Activated T-helper 1 cell treated with anti-CD3 and anti-CD28 coated beads, Interleukin-12 subunit alpha, Interleukin-12 subunit beta, Interleukin-2, Interleukin-4 antibody, amounts not matched to agents 30 ng/mL and 10 ng/mL and 1 ng/mL, durations not matched to agents 14 hours and 24 hours and 36 hours (primary cell): ENCODE measurements at regions of chr20 and their contacts with region 1.

Region 1: DNA sequence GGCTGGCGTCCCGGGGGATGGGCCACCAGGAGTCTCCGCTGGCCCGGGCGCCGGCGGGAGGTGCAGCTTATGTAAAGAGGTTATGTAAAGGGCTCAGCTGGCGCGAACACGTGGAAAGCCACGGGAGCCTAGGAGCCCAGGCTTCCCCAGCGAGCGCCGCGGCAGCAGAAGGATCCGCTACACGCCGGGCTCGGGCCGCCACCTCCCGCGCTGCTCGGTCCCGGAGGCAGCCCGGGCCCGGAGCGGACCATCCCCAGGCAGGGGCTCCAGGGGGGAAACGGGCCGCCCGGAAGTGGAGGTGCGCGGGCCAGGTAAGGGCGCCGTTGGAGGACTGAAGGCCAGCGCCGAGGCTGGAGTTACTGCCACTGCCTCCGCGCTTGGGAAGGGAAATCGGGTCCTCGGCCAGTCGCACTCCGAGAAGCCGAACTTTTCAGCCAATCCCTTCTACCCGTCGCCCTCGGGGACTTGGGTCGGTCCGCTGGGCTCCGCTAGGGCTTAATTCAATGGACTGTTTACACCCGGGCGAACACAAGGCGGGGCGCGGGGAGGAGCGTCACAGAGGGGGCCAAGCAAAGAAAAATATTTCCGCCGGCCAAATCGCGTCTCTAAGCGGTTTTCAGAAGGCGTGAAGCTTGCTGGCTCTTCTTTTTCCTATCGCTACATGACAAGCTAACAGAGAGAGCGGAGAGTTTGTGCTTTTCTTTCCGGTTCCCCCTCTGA is 398 bp downstream of the STK35 start:
- DNase-seq: peak; percentile 84
- H3K4me3 Mint-ChIP-seq: peak overlapping the region; percentile 92
- H3K27ac Mint-ChIP-seq: peak overlapping the region; percentile 100
- H3K4me1 Mint-ChIP-seq: peaks cover 40% of the 10 kb centered on the region
- H3K27me3 Mint-ChIP-seq: peaks cover 9% of the 10 kb centered on the region

Region 2: GRCh38 chr20:297098-297924 is 1804.7 kb before region 1 on chr20 and contains the start of gene ZCCHC3:
- intact Hi-C with region 1: loop called (anchors 5 kb)
- DNase-seq: peak; percentile 85
- H3K4me3 Mint-ChIP-seq: peak within 1 kb of the TSS; percentile 99
- H3K27ac Mint-ChIP-seq: peak within 1 kb of the TSS; percentile 100
- H3K4me1 Mint-ChIP-seq: peaks cover 52% of the 10 kb centered on the region
- H3K27me3 Mint-ChIP-seq: no peaks in the 10 kb centered on the region
- total RNA-seq, gene ZCCHC3: 25.9 TPM in 2 replicates

Region 3: DNA sequence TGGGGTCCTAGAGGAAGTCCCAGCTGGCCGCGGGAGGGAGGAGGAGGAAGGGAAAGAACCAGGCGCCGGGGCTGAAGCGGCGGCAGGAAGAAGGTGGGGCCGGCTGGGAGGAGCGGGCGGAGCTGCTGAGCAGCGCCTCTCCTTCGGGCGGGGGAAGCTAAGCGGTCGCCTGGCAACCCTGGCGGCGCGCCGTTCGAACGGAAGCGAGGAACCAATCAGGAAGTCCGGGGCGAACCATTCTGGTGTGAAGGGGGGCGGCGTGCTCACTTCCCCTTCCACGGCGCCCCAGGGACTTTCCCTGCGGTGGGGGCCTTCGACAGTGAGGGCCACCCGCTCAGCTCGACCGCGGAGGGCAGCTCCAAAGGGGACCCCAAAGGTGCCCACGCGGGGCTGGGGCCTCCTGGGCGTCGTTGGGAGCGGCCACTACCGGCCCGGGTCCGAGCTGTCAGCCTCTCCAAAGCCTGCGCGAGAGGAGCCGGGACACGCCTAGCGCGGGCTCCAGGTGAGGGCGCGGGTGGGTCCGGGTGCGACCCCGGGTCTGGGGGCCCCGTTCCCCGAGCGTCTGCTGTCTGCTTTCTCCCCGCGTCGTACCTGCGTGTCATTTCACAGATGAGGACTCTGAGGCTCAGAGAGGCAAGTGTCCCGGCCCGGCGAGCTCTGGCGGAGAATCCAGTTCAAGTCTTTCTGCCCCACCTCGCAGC is 1268.4 kb before region 1 on chr20 and contains the start of gene FAM110A:
- intact Hi-C with region 1: loop called (anchors 5 kb)
- DNase-seq: peak; percentile 95
- H3K4me3 Mint-ChIP-seq: peak within 1 kb of the TSS; percentile 81
- H3K27ac Mint-ChIP-seq: peak within 1 kb of the TSS; percentile 86
- H3K4me1 Mint-ChIP-seq: peaks cover 51% of the 10 kb centered on the region
- H3K27me3 Mint-ChIP-seq: peaks cover 2% of the 10 kb centered on the region
- total RNA-seq, gene FAM110A: 19.0 and 21.1 TPM in 2 replicates

Region 4: GRCh38 chr20:2118783-2119182 is 16.8 kb after region 1 on chr20:
- intact Hi-C with region 1: loop called (anchors 2 kb)
- DNase-seq: no peak
- H3K4me3 Mint-ChIP-seq: no peak overlapping the region
- H3K27ac Mint-ChIP-seq: peak overlapping the region; percentile 49
- H3K4me1 Mint-ChIP-seq: peaks cover 54% of the 10 kb centered on the region
- H3K27me3 Mint-ChIP-seq: no peaks in the 10 kb centered on the region

Region 5: DNA sequence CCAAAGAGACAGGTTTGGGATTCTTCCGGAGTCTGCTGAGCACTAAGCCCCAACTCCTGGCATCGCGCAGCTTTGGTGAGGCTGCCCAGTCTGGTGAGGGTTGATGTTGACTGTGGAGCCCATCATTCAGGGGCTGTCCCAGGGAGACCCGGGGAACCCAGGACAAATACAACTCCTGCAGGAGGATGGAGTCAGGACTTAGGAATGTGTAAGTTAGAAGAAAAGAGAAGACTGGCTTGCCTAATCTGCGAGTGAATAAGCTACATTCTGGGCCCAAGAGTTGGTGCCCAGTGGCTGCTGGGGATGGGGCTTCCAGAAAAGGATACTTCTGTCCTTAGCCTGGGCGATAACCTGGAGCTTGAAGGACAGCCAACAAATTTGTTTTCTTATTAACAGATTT is 47.5 kb after region 1 on chr20:
- intact Hi-C with region 1: no loop called
- DNase-seq: no peak
- H3K4me3 Mint-ChIP-seq: no peak overlapping the region
- H3K27ac Mint-ChIP-seq: no peak overlapping the region
- H3K4me1 Mint-ChIP-seq: no peaks in the 10 kb centered on the region
- H3K27me3 Mint-ChIP-seq: no peaks in the 10 kb centered on the region

Region 6: DNA sequence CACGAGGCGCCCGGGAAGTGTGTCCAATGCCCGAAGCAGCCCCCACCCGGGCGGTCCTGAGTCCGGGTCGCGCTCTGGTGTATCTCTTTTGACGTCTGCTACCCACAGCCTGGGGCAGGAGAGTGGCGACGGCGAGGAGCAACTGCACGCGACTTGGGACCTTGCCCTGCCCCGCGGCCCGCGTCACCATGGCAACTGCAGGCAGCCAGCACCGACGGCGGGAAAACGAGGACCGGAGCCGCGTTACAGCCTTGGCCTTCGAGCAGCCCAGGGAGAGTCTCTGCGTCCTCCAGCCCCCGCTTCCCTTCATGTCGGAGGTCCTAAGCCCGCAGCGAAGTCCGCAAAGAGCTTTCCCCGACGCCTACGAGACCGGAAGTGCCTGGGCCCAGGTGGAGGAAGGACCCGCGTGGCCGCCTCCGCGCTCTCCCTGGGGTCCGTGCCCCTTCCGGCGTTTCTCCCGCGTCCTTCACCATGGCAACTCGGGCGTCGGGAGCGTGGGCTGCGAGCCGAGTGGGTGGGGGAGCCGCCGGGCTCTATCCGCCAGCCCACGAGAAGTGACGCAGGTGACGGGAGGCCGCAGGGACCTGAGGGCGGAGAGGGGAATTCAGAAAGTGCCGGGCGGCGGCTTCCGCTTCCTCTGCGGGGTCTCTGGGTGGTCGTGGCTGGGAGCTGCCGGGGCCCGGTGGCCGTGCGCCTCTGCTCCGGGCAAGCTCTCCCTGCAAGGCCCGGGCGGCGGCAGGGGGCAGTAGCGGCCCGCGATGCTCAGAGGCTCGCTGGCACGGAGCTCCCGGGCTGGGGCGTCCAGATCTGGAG is 105.1 kb after region 1 on chr20:
- intact Hi-C with region 1: loop called (anchors 1 kb)
- DNase-seq: peak; percentile 52
- H3K4me3 Mint-ChIP-seq: peak overlapping the region; percentile 80
- H3K27ac Mint-ChIP-seq: peak overlapping the region; percentile 61
- H3K4me1 Mint-ChIP-seq: no peaks in the 10 kb centered on the region
- H3K27me3 Mint-ChIP-seq: peaks cover 22% of the 10 kb centered on the region

Region 7: DNA sequence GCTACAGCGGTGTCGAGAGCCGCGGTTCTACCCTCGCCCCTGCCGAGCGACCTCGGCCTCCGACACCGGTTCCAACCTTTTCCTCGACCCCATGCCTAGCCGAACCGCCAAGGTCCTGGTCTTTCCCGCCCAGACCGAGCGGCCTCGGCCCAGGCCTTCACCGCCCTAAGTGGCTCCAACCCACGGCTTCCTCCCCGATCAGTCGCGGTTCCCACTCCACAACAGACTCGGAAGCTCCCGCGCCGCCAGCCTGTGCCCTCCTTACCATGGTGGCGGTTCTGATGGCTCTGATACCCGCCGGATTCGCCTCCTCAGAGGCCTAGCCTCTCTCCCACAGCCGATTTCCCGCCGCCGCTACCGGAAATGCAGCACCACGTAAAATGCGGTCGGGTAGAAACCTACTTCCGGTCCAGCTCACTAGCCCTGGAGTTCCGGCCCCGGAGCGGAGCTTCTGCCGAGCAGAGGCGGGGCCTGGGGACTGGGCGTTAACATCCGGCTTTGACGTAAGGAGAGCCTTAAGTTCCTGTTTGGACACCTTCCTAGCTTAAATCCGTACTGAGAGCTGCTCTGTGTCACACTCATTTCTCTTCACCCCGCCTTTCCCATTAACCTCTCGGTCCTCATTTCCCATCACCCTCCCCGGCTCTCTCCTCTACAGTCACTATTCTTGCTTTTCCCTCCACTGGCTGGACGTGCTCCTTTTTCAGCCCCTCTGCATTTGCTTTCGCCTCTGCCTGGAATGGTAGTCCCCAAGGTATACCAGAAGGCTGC is 368.6 kb after region 1 on chr20 and contains the start of gene SNRPB:
- intact Hi-C with region 1: loop called (anchors 2 kb)
- DNase-seq: peak; percentile 96
- H3K4me3 Mint-ChIP-seq: peak within 1 kb of the TSS; percentile 99
- H3K27ac Mint-ChIP-seq: peak within 1 kb of the TSS; percentile 97
- H3K4me1 Mint-ChIP-seq: peaks cover 58% of the 10 kb centered on the region
- H3K27me3 Mint-ChIP-seq: no peaks in the 10 kb centered on the region
- total RNA-seq, gene SNRPB: 533 and 548 TPM in 2 replicates

Region 8: GRCh38 chr20:2651772-2652723 is 550.0 kb after region 1 on chr20 and contains the start of gene NOP56:
- intact Hi-C with region 1: loop called (anchors 5 kb)
- DNase-seq: peak; percentile 94
- H3K4me3 Mint-ChIP-seq: peak within 1 kb of the TSS; percentile 93
- H3K27ac Mint-ChIP-seq: peak within 1 kb of the TSS; percentile 93
- H3K4me1 Mint-ChIP-seq: peaks cover 24% of the 10 kb centered on the region
- H3K27me3 Mint-ChIP-seq: no peaks in the 10 kb centered on the region
- total RNA-seq, gene NOP56: 863 and 897 TPM in 2 replicates